MCF 10A (cell line): ENCODE measurements at regions of chr10 and their contacts with region 1.

Region 1: GRCh38 chr10:90787393-90788198 is 70.2 kb downstream of the HTR7 start:
- DNase-seq: peak; percentile 59
- H3K4me3 Mint-ChIP-seq: no peak overlapping the region
- H3K27ac Mint-ChIP-seq: no peak overlapping the region
- H3K4me1 Mint-ChIP-seq: peaks cover 21% of the 10 kb centered on the region
- H3K27me3 Mint-ChIP-seq: no peaks in the 10 kb centered on the region
- CTCF ChIP-seq: peak; percentile 77

Region 2: DNA sequence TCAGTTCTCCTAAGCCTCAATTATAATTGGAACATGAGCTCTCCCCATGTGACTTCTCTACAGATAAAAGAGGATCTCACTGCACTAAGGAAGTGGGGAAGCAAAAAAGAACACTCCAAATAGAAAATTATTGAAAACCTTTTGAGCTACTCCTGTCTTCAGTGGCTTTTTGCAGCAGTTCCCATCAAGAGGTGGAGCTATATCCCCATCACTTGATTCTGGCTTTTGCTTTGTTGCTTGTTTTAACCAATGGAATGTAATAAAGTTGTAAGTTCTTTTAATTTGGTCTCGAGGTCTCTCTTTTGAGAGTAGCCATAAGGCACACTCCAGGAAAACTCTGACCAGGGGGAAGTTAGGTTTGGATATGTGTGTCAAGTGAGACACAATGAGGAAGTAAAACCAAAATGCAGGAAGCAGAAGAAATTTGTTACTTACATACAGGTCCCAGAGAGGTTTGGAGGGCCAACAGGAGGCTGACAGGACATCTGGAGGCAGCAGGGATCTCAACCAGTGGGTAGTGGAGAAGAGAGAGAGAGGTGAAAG is 499.1 kb before region 1 on chr10:
- CTCF ChIA-PET with region 1: interaction called, 3 read pairs
- POLR2A ChIA-PET with region 1: no interaction called
- intact Hi-C with region 1: loop called (anchors 1 kb)
- DNase-seq: peak; percentile 42
- H3K4me3 Mint-ChIP-seq: no peak overlapping the region
- H3K27ac Mint-ChIP-seq: no peak overlapping the region
- H3K4me1 Mint-ChIP-seq: peaks cover 25% of the 10 kb centered on the region
- H3K27me3 Mint-ChIP-seq: no peaks in the 10 kb centered on the region
- CTCF ChIP-seq: peak; percentile 31

Region 3: GRCh38 chr10:90751107-90751997 is 36.2 kb before region 1 on chr10:
- CTCF ChIA-PET with region 1: interaction called, 37 read pairs
- POLR2A ChIA-PET with region 1: interaction called, 5 read pairs
- intact Hi-C with region 1: loop called (anchors 1 kb)
- DNase-seq: peak; percentile 71
- H3K4me3 Mint-ChIP-seq: no peak overlapping the region
- H3K27ac Mint-ChIP-seq: no peak overlapping the region
- H3K4me1 Mint-ChIP-seq: peaks cover 16% of the 10 kb centered on the region
- H3K27me3 Mint-ChIP-seq: no peaks in the 10 kb centered on the region
- CTCF ChIP-seq: peak; percentile 91

Region 4: DNA sequence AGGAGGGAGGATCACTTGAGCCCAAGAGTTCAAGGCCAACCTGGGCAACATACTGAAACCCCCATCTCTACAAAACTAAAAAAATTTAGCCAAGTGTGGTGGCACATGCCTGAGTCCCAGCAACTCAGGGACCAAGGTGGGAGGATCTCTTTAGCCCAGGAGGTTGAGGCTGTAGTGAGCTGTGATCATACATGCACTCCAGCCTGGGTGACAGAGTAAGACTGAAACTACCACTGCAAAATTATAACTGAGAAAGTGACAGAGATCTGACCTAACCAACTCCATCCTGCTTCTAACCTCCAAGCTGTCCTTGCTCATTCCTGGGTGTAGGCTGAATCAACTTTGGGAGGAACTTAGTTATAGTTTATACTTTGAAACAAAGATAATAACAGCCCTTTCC is 10.9 kb after region 1 on chr10:
- CTCF ChIA-PET with region 1: interaction called, 37 read pairs
- POLR2A ChIA-PET with region 1: interaction called, 3 read pairs
- intact Hi-C with region 1: no loop called
- DNase-seq: no peak
- H3K4me3 Mint-ChIP-seq: no peak overlapping the region
- H3K27ac Mint-ChIP-seq: no peak overlapping the region
- H3K4me1 Mint-ChIP-seq: no peaks in the 10 kb centered on the region
- H3K27me3 Mint-ChIP-seq: no peaks in the 10 kb centered on the region
- CTCF ChIP-seq: no peak

Region 5: GRCh38 chr10:90805211-90805610 is 17.6 kb after region 1 on chr10:
- CTCF ChIA-PET with region 1: interaction called, 37 read pairs
- POLR2A ChIA-PET with region 1: interaction called, 4 read pairs
- intact Hi-C with region 1: no loop called
- DNase-seq: no peak
- H3K4me3 Mint-ChIP-seq: no peak overlapping the region
- H3K27ac Mint-ChIP-seq: no peak overlapping the region
- H3K4me1 Mint-ChIP-seq: no peaks in the 10 kb centered on the region
- H3K27me3 Mint-ChIP-seq: no peaks in the 10 kb centered on the region
- CTCF ChIP-seq: no peak

Region 6: DNA sequence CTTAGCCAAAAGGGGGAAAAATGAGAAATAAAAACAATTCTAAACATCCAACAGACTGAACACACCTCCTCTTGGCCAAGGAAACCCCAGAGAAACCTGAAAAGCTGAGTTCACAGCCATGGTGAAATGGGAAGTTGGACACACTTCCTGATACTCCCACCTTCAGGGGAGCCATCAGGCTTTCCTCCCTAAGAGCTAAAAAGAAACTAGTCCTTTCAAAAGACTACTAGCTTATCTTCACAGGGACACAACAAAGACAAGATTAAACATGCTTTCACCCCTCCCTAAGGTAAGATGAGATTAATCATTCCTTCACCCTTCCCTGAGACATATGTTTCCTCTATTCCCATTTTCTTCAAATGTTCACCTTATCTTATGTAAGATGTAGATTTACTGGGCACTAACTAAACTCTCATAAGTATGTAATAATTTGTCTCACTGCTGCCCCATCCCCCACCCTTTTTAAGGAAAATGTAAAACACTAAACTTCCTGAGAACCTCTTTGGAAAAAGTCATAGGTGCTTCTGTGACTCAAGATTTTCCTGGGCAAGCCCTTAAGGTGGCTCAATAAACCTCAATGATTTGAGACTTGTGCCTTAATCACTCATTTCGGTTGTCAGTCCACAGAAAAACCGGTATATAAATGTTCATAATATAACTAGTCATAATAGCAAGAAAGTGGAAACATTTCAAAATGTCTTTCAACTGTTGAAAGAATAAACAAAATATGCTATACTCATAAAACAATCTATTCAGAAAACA is 29.7 kb after region 1 on chr10:
- CTCF ChIA-PET with region 1: interaction called, 8 read pairs
- POLR2A ChIA-PET with region 1: interaction called, 15 read pairs
- intact Hi-C with region 1: no loop called
- DNase-seq: peak; percentile 41
- H3K4me3 Mint-ChIP-seq: peak overlapping the region; percentile 0
- H3K27ac Mint-ChIP-seq: peak overlapping the region; percentile 59
- H3K4me1 Mint-ChIP-seq: peaks cover 28% of the 10 kb centered on the region
- H3K27me3 Mint-ChIP-seq: no peaks in the 10 kb centered on the region
- CTCF ChIP-seq: no peak